ENCODE measurements at regions of chr3 and their contacts with region 1.

Region 1: DNA sequence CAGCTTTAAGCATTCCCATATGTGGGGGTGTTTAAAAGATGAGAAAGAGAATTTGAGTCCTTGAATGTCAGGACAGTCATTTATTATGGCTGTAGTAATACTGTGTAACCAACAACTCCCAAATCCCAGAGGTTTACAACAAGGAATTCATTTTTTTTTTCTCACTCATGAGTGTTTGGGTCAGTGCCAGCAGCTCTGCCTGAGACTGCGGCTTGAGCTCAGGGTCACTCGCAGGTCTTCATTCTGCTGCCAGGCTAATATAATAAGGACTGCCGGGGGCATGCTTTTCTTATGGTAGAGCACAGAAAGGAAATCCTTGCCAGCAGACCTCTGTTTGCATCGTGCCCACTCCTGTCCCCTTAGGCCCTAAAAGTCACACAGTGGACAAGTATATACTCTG is 277.9 kb upstream of the LMCD1 start:
- DNase-seq: peak; percentile 44
- H3K4me3 ChIP-seq: no peak overlapping the region
- CTCF ChIP-seq: no peak

Region 2: DNA sequence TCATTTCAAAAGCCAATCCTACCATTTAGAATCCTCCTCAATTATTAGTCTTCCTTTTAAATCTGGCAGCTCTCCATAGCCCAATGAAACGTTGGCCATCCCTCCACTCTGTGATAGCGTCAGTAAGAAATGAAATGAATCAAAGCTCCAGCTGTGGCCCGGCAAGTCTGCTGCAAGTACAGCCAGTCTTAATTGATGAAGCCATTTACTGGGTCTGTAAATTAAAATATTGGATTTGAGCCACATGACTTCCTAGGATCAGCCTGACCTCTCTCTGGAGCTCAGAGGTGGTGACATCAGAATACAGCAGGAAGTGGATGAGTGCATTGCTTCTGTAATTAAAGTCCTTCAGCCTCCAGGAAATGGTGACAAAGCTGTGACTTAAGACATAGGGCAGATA is 69.1 kb before region 1 on chr3:
- in situ Hi-C with region 1: loop called (anchors 5 kb)
- DNase-seq: no peak
- H3K4me3 ChIP-seq: no peak overlapping the region
- CTCF ChIP-seq: no peak

Region 3: DNA sequence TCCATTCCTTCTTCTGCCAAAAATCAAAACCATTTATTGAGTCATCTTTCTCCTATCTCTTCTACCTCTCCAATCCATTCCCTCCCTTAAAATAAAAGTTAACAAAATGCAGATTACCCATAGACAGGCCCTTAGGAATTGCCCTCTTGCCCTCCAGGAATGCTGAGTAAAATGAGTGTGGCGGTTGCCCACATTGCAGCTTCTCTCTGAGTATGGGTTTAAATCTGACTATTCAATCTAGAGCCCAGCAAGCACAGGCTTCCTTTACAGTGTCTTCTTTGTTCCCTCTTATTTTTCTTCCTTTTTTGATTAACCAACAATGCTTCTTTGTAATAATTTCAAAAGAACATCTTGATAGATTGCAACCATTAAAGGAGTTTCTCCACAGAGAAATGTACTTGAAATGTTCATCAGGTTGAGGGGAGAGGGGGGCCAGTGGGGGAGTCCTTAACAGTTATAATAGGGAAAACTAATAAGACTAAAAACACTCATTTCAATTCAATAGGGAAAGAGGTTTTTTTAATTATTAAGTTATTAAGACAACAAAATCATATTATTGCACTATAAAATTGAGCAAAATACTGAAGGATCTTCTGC is 142.5 kb after region 1 on chr3:
- in situ Hi-C with region 1: no loop called
- DNase-seq: no peak
- H3K4me3 ChIP-seq: no peak overlapping the region
- CTCF ChIP-seq: no peak

Region 4: GRCh38 chr3:8470801-8471200 is 247.0 kb after region 1 on chr3:
- in situ Hi-C with region 1: no loop called
- DNase-seq: no peak
- H3K4me3 ChIP-seq: no peak overlapping the region
- CTCF ChIP-seq: no peak